PC-9 (cell line): ENCODE measurements at regions of chr3 and their contacts with region 1.

Region 1: GRCh38 chr3:77825001-77825827 is 785.3 kb downstream of the ROBO2 start:
- DNase-seq: peak; percentile 94 to 97
- H3K4me3 ChIP-seq: no peak overlapping the region
- H3K27ac ChIP-seq: peak overlapping the region; percentile 79
- H3K4me1 ChIP-seq: peaks cover 15% of the 10 kb centered on the region
- H3K27me3 ChIP-seq: no peaks in the 10 kb centered on the region
- CTCF ChIP-seq: no peak

Region 2: DNA sequence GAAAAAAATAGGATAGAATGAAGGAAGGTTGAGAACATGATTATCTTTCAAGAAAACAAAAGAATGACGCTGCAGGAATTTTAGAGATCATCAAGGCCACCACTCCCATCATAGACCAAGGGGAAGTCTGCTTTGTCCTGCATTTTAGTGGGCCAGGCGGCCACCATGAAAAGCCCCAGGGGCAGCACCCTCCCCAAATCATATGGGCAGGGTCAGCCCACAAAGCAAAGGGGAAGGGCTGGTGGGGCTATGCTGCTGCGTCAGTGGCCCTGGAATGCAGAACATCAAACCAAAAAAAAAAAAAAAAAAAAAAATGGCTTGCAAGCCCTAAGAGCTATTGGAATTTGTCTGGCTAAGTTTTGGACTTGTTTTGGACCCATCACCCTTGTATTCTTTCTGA is 164.5 kb before region 1 on chr3:
- CTCF ChIA-PET with region 1: no interaction called
- POLR2A ChIA-PET with region 1: no interaction called
- intact Hi-C with region 1: loop called (anchors 2 kb)
- DNase-seq: peak in 1 of 2 experiments; percentile 48
- H3K4me3 ChIP-seq: no peak overlapping the region
- H3K27ac ChIP-seq: no peak overlapping the region
- H3K4me1 ChIP-seq: no peaks in the 10 kb centered on the region
- H3K27me3 ChIP-seq: no peaks in the 10 kb centered on the region
- CTCF ChIP-seq: no peak

Region 3: DNA sequence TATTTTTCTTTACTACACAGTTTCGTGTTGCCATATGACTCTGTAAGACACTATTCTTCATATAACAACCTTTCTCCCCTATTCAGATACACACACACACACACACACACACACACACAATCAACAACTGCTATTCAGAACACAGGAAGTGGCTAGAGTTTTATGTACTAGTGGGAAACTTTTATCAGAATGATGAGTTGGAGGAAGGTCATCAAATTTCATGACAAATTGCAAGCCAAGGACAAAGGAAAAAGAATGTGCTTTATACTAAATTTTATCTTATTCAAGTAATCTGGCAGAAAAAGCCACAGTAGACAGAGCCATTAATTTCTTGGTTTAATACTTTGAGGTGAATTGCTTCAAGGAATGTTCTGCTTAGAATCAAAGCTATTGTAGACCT is 114.5 kb after region 1 on chr3:
- CTCF ChIA-PET with region 1: no interaction called
- POLR2A ChIA-PET with region 1: no interaction called
- intact Hi-C with region 1: loop called (anchors 1 kb)
- DNase-seq: no peak
- H3K4me3 ChIP-seq: no peak overlapping the region
- H3K27ac ChIP-seq: no peak overlapping the region
- H3K4me1 ChIP-seq: no peaks in the 10 kb centered on the region
- H3K27me3 ChIP-seq: no peaks in the 10 kb centered on the region
- CTCF ChIP-seq: no peak

Region 4: DNA sequence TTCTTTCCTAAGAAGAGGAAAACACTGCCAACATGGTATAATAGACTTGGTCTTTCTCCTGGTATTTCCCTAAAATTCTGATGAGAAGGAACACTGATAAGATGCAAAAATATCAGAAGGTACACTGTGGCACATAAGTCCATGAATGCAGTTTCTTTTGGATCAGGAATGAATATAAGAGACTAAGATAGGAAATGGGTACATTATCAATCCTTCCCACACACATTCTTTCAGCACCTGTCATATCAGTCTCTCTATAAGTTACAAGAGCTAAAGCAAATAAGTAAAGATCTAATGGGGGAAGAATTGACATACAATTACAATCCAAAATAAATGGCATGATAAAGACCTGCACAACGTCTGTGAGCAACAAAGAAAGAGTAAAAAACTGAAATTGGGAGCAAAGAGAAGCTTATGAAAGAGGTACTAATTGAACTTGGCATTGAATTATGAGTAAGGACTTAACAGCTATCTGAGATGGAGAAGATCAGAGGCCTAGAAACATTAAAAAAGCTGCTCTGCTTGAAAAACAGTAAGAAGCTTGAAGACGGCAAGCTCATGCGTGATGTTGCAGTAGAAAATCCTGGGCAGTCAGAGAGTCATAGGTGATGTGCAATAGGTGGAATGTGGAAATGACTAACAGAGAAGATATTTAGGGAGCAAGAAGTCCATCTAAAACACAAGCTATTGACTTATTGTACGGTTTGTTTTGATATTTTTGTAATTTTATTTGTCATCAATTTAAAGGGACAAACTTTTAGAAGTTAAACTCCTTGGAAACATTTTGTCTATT is 315.8 kb after region 1 on chr3:
- CTCF ChIA-PET with region 1: interaction called, 4 read pairs
- POLR2A ChIA-PET with region 1: no interaction called
- intact Hi-C with region 1: loop called (anchors 1 kb)
- DNase-seq: peak in 1 of 2 experiments; percentile 21
- H3K4me3 ChIP-seq: no peak overlapping the region
- H3K27ac ChIP-seq: no peak overlapping the region
- H3K4me1 ChIP-seq: no peaks in the 10 kb centered on the region
- H3K27me3 ChIP-seq: no peaks in the 10 kb centered on the region
- CTCF ChIP-seq: no peak

Region 5: GRCh38 chr3:78645628-78646310 is 820.6 kb after region 1 on chr3:
- CTCF ChIA-PET with region 1: no interaction called
- POLR2A ChIA-PET with region 1: no interaction called
- intact Hi-C with region 1: loop called (anchors 2 kb)
- DNase-seq: peak; percentile 7 to 65
- H3K4me3 ChIP-seq: no peak overlapping the region
- H3K27ac ChIP-seq: no peak overlapping the region
- H3K4me1 ChIP-seq: no peaks in the 10 kb centered on the region
- H3K27me3 ChIP-seq: no peaks in the 10 kb centered on the region
- CTCF ChIP-seq: peak; percentile 93